ENCODE measurements at regions of chr2 and their contacts with region 1.

Region 1: GRCh38 chr2:168956392-168956791 is 55.3 kb downstream of the G6PC2 start:
- DNase-seq: no peak
- ATAC-seq: no peak
- H3K4me3 Mint-ChIP-seq: no peak overlapping the region
- H3K27ac Mint-ChIP-seq: no peak overlapping the region
- H3K4me1 Mint-ChIP-seq: no peaks in the 10 kb centered on the region
- H3K27me3 Mint-ChIP-seq: no peaks in the 10 kb centered on the region
- CTCF ChIP-seq: no peak

Region 2: GRCh38 chr2:168920504-168921157 is 35.8 kb before region 1 on chr2:
- CTCF ChIA-PET with region 1: no interaction called
- POLR2A ChIA-PET with region 1: no interaction called
- intact Hi-C with region 1: no loop called
- DNase-seq: no peak
- ATAC-seq: no peak
- H3K4me3 Mint-ChIP-seq: no peak overlapping the region
- H3K27ac Mint-ChIP-seq: no peak overlapping the region
- H3K4me1 Mint-ChIP-seq: no peaks in the 10 kb centered on the region
- H3K27me3 Mint-ChIP-seq: peaks cover 10% of the 10 kb centered on the region
- CTCF ChIP-seq: peak; percentile 50

Region 3: GRCh38 chr2:168944065-168944464 is 12.3 kb before region 1 on chr2:
- CTCF ChIA-PET with region 1: no interaction called
- POLR2A ChIA-PET with region 1: no interaction called
- intact Hi-C with region 1: no loop called
- DNase-seq: no peak
- ATAC-seq: no peak
- H3K4me3 Mint-ChIP-seq: no peak overlapping the region
- H3K27ac Mint-ChIP-seq: no peak overlapping the region
- H3K4me1 Mint-ChIP-seq: no peaks in the 10 kb centered on the region
- H3K27me3 Mint-ChIP-seq: peaks cover 2% of the 10 kb centered on the region
- CTCF ChIP-seq: no peak

Region 4: GRCh38 chr2:168992591-168993349 is 36.4 kb after region 1 on chr2:
- CTCF ChIA-PET with region 1: no interaction called
- POLR2A ChIA-PET with region 1: no interaction called
- intact Hi-C with region 1: no loop called
- DNase-seq: no peak
- ATAC-seq: no peak
- H3K4me3 Mint-ChIP-seq: no peak overlapping the region
- H3K27ac Mint-ChIP-seq: no peak overlapping the region
- H3K4me1 Mint-ChIP-seq: no peaks in the 10 kb centered on the region
- H3K27me3 Mint-ChIP-seq: no peaks in the 10 kb centered on the region
- CTCF ChIP-seq: no peak

Region 5: GRCh38 chr2:169131587-169132512 is 175.5 kb after region 1 on chr2:
- CTCF ChIA-PET with region 1: interaction called, 19 read pairs
- POLR2A ChIA-PET with region 1: no interaction called
- intact Hi-C with region 1: loop called (anchors 1 kb)
- DNase-seq: no peak
- ATAC-seq: peak; percentile 86
- H3K4me3 Mint-ChIP-seq: no peak overlapping the region
- H3K27ac Mint-ChIP-seq: no peak overlapping the region
- H3K4me1 Mint-ChIP-seq: no peaks in the 10 kb centered on the region
- H3K27me3 Mint-ChIP-seq: no peaks in the 10 kb centered on the region
- CTCF ChIP-seq: peak; percentile 52